Left lung (tissue), 14 donors: ENCODE measurements at regions of chr7 and their contacts with region 1.

Region 1: DNA sequence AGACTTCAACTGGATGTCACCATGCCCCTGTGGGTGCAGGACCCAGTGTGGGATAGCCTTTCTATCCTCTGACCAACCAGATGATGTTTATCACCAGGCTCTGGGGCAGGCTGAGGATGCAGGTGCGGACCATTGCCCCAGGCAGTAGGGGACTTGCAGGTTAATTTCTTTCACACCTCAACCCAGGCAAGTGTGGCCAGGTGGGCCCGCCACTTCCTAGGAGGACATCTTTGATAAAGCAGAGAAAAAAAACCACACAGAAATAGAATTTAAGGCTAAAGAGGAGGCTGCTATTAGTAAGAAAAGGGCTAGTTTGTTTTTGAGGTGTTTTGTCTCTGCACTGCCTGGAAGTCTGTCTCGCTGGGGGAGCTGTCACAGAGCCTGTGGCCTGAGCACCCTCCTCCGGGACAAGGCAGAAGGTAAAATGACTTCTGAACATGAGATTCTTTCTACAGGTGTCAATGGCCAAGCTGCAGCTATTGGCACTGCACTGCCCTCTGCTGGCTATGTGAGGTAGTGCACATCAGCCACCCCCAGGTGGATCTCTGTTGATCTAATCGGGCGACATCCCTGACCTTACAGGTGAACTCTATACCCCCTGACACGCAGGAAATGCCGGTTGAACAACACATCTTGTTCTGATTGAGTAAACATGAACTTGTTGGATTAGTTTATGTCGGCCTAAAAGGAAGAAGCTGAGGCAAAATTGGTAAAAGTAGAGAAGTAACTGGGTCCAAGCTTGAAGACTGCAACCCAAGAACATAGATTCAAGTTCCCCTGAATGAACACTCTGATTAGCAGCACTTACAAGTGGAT is 21.0 kb downstream of the UPP1 start:
- DNase-seq: peak; percentile 32 to 90 (median 72)
- ATAC-seq: peak; percentile 97
- H3K4me3 ChIP-seq: no peak overlapping the region
- H3K27ac ChIP-seq: peak overlapping the region in 1 of 2 donors; percentile 37
- H3K4me1 ChIP-seq: peaks cover 0 to 6% of the 10 kb centered on the region in 2 donors
- H3K27me3 ChIP-seq: no peaks in the 10 kb centered on the region
- CTCF ChIP-seq: peak; percentile 99

Region 2: GRCh38 chr7:47945261-47946001 is 164.6 kb before region 1 on chr7:
- intact Hi-C with region 1: loop called in 1 of 2 experiments (anchors 5 kb)
- DNase-seq: peak in 3 of 4 donors; percentile 45 to 72 (median 71)
- ATAC-seq: peak; percentile 74
- H3K4me3 ChIP-seq: no peak overlapping the region
- H3K27ac ChIP-seq: no peak overlapping the region
- H3K4me1 ChIP-seq: peaks cover 15 to 34% of the 10 kb centered on the region in 2 donors
- H3K27me3 ChIP-seq: no peaks in the 10 kb centered on the region
- CTCF ChIP-seq: peak; percentile 62 to 83

Region 3: GRCh38 chr7:47991741-47992311 is 118.2 kb before region 1 on chr7:
- intact Hi-C with region 1: loop called in 1 of 2 experiments (anchors 5 kb)
- DNase-seq: peak; percentile 74 to 98 (median 88)
- ATAC-seq: peak; percentile 99
- H3K4me3 ChIP-seq: peak overlapping the region; percentile 31 to 51
- H3K27ac ChIP-seq: peak overlapping the region; percentile 26 to 80
- H3K4me1 ChIP-seq: peaks cover 0 to 17% of the 10 kb centered on the region in 2 donors
- H3K27me3 ChIP-seq: no peaks in the 10 kb centered on the region
- CTCF ChIP-seq: peak; percentile 55 to 59

Region 4: DNA sequence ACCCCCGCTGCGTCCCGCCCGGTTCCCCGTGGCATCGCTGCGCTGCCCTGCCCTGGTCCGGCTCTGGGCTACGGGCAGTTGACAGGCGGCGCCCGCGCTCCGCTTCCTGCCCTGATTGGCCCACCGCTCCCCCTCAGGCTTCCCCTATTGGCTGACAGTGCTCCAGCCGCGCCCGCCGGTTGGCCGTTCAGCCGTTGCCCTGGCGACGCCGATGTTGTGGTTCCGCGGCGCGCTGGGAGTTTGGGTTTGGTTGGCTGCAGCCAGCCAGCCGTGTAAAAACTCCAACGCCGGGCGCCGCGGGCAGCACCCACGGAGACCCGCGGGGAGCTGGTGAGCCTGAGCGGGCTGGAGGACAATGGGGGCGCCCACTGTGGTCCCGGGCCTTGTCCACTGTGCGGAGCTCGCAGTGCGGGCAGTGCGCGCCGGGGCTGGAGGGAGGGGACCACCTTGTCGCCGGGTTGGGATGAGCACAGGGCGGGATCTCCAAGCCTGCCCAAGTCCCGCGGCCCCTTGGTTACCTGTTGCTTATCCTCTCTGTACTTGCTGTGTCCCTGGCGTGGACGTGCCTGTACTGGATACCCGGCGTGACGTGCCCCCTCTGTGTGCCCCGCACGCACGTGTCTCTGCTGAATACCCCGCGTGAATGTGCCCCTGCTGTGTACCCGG is 74.6 kb before region 1 on chr7 and contains the start of gene C7orf57:
- intact Hi-C with region 1: loop called in 1 of 2 experiments (anchors 10 kb)
- DNase-seq: peak; percentile 81 to 97 (median 92)
- ATAC-seq: peak; percentile 100
- H3K4me3 ChIP-seq: peak within 1 kb of the TSS; percentile 41 to 49
- H3K27ac ChIP-seq: no peak within 1 kb of the TSS
- H3K4me1 ChIP-seq: peaks cover 6 to 9% of the 10 kb centered on the region in 2 donors
- H3K27me3 ChIP-seq: peaks cover 26 to 57% of the 10 kb centered on the region in 2 donors
- CTCF ChIP-seq: peak in 1 of 2 donors; percentile 17
- polyA plus RNA-seq, gene C7orf57: 0.60 to 3.9 (median 2.8) TPM